ENCODE measurements at regions of chr3 and their contacts with region 1.

Region 1: DNA sequence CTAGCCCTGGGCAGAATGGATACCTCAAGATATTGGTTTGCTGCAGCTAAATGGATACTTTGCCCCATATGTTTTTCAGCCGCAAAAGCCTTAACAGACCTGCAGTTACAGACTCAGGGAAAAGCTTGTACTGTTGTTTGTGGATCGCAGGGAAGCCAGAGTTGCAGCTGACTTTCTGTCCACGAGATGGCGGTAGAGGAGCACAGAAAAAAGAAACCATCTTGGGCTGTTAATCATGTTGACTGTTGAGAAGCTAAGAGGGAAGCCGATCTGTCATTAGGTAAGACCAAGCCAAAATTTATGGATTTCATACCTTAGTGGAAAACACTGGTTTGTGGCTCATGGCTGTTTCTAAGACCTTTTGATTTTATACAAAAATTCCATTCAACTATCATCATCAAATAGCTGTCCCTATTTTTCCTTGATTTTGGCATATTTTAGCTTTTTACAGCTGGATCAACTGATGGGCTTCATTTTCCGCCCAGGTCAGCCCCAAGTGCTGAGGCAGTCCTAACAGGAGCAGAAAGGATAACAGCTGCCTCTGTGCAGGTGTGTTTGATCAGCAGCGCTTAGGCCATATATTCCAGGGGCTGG is 205.7 kb upstream of the ZPLD1 start:
- DNase-seq: peak; percentile 83
- H3K4me3 ChIP-seq: no peak overlapping the region
- H3K27ac ChIP-seq: no peak overlapping the region
- H3K4me1 ChIP-seq: no peaks in the 10 kb centered on the region
- H3K27me3 ChIP-seq: peaks cover 10 to 13% of the 10 kb centered on the region in 2 experiments
- CTCF ChIP-seq: peak; percentile 83 to 89
- POLR2A ChIP-seq: no peak

Region 2: GRCh38 chr3:101809178-101810021 is 419.8 kb before region 1 on chr3:
- CTCF ChIA-PET with region 1: interaction called, 358 read pairs
- POLR2A ChIA-PET with region 1: interaction called, 4 read pairs
- dilution Hi-C with region 1: no loop called
- intact Hi-C with region 1: loop called (anchors 1 kb)
- DNase-seq: peak; percentile 69
- H3K4me3 ChIP-seq: no peak overlapping the region
- H3K27ac ChIP-seq: peak overlapping the region; percentile 60
- H3K4me1 ChIP-seq: peaks cover 14% of the 10 kb centered on the region
- H3K27me3 ChIP-seq: no peaks in the 10 kb centered on the region
- CTCF ChIP-seq: peak; percentile 51 to 59
- POLR2A ChIP-seq: no peak

Region 3: DNA sequence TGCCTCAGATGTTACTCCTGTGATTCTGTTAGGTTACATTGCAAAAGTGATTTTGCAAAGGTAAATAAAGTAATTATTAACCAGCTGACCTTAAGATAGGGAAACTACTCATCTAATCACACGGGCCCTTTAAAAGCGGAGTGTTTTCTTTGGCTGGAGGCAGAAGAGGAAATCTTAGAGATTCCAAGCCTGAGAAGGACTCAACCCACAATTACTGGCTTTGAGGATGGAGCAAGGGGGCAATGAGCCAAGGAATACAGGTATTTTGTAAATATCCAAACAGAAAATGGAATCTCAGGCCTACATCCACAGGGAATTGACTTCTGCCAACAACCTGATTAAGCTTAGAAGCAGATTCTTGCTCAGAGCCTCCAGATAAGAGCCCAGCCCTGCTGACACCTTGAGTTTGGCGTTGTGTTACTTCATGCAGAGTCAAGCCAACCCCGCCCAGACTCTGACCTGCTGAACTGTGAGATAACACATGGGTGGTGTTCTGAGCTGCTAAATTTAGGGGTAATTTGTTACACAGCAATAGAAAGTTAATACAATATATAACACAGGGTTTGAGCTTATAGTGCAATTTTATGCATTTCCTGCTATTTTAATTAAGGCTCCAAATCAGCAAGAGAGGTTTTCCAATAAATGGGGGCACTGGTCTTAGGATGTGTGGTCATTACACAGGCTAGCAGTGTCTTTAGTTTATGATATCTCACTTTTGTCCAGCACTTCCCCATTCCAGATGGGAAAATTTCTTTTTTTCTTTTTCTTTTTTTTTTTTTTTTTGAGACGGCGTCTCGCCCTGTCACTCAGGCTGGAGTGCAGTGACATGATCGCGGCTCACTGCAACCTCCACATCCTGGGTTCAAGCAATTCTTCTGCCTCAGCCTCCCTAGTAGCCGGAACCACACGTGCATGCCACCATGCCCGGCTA is 360.4 kb before region 1 on chr3:
- CTCF ChIA-PET with region 1: interaction called, 28 read pairs
- POLR2A ChIA-PET with region 1: no interaction called
- dilution Hi-C with region 1: no loop called
- intact Hi-C with region 1: no loop called
- DNase-seq: peak; percentile 78
- H3K4me3 ChIP-seq: no peak overlapping the region
- H3K27ac ChIP-seq: no peak overlapping the region
- H3K4me1 ChIP-seq: peaks cover 21% of the 10 kb centered on the region
- H3K27me3 ChIP-seq: no peaks in the 10 kb centered on the region
- CTCF ChIP-seq: no peak
- POLR2A ChIP-seq: no peak

Region 4: DNA sequence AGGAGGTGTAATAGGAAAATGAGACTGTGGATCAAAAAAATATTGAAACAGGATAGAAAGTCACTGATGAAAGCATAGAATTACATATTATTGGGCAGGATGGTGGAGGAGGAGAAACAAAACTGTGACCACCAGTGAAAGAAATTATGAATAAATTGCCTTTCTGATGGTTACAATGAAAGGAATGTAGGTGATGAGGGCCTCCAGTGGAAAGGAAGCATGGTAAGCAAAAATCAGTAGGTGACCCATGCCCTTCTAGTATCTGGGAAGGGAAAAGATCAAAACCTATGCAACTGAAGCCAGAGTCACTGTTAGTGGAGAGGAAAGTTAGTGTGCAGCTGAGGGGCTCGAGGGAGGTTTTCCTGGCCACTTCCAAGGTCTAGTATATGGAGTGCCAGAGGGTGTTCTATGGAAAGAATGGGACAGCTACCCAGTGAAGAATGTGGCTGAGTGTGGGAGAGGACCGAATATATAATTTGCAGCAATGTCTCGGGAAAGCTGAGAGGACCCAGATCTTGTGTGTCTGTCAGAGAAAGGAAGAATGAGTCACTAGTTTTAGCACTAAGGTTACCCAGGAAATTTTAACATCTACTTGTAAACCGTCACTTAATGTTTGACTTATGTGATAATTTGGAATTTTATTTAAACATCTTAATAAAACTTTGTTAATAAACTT is 233.7 kb before region 1 on chr3:
- CTCF ChIA-PET with region 1: interaction called, 27 read pairs
- POLR2A ChIA-PET with region 1: no interaction called
- dilution Hi-C with region 1: no loop called
- intact Hi-C with region 1: no loop called
- DNase-seq: no peak
- H3K4me3 ChIP-seq: no peak overlapping the region
- H3K27ac ChIP-seq: no peak overlapping the region
- H3K4me1 ChIP-seq: no peaks in the 10 kb centered on the region
- H3K27me3 ChIP-seq: no peaks in the 10 kb centered on the region
- CTCF ChIP-seq: no peak
- POLR2A ChIP-seq: no peak

Region 5: GRCh38 chr3:102141096-102141927 is 87.8 kb before region 1 on chr3:
- CTCF ChIA-PET with region 1: interaction called, 18 read pairs
- POLR2A ChIA-PET with region 1: no interaction called
- dilution Hi-C with region 1: no loop called
- intact Hi-C with region 1: no loop called
- DNase-seq: peak; percentile 76
- H3K4me3 ChIP-seq: no peak overlapping the region
- H3K27ac ChIP-seq: peak overlapping the region; percentile 62
- H3K4me1 ChIP-seq: peaks cover 20% of the 10 kb centered on the region
- H3K27me3 ChIP-seq: no peaks in the 10 kb centered on the region
- CTCF ChIP-seq: no peak
- POLR2A ChIP-seq: no peak

Region 6: DNA sequence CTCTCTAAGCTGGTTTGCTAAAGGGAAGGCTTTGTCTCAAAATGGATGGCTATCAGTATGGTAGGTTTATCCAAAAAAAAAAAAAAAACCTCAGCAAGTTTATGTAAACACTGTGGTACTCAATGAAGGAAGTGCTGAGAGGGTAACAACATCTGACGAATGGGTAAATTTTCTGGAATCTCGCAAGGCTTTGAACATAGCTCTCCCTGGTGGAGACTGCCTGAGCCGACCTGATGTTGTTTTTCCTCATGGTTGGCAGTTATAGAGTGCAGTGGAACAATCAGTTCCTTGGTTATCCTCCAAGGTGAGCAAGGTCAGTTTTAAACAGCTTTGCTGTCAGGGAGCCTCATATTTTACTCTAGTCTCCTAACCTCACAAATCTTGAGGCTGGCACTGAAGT is 300.3 kb after region 1 on chr3:
- CTCF ChIA-PET with region 1: interaction called, 304 read pairs
- POLR2A ChIA-PET with region 1: no interaction called
- dilution Hi-C with region 1: no loop called
- intact Hi-C with region 1: no loop called
- DNase-seq: no peak
- H3K4me3 ChIP-seq: no peak overlapping the region
- H3K27ac ChIP-seq: no peak overlapping the region
- H3K4me1 ChIP-seq: no peaks in the 10 kb centered on the region
- H3K27me3 ChIP-seq: peaks cover 3 to 13% of the 10 kb centered on the region in 2 experiments
- CTCF ChIP-seq: no peak
- POLR2A ChIP-seq: no peak